Activated CD8-positive, alpha-beta memory T cell treated with anti-CD3 and anti-CD28 coated beads, Interleukin-2, amount 10 ng/mL, durations not matched to agents 7 days and 5 days (primary cell): ENCODE measurements at regions of chr17 and their contacts with region 1.

Region 1: DNA sequence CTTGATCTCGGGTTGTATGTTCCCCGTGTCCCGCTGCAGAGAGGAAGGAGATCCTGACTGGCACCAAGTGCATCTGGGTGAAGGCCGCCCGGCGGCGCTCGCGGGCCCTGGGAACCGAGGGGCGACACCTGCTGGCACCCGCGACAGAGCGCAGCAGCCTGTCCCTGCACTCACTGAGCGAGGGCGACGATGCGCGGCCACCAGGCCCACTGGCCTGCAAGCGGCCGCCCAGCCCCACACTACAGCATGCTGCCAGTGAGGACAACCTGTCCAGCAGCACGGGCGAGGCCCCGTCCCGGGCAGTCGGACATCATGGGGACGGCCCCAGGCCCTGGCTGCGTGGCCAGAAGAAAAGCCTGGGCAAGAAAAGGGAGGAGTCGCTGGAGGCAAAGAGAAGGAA is 7.5 kb downstream of the BTBD17 start:
- DNase-seq: peak; percentile 77
- ATAC-seq: peak; percentile 78
- H3K4me3 Mint-ChIP-seq: no peak overlapping the region
- H3K27ac Mint-ChIP-seq: no peak overlapping the region
- H3K4me1 Mint-ChIP-seq: peaks cover 10% of the 10 kb centered on the region
- H3K27me3 Mint-ChIP-seq: peaks cover 78% of the 10 kb centered on the region

Region 2: DNA sequence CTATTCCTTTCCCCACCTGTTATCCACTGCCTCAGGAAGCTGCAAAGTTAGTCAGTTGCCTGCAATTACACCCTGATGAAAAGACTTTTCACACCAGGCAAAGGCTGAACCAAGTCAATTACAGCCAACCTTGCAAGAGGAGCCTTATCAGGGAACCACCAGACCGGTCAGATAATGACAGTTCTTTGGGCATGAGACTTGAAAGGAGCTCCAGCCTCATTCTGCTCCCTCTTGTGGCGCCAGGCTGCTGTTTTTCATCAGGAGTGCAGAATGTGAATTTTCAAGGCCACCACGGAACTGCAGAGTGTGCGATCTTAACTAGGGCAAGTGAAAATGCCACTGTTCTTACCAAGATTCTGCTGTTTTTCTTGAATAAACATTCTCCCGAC is 57.6 kb before region 1 on chr17:
- CTCF ChIA-PET with region 1: interaction called, 37 read pairs
- DNase-seq: peak; percentile 64
- ATAC-seq: no peak
- H3K4me3 Mint-ChIP-seq: no peak overlapping the region
- H3K27ac Mint-ChIP-seq: no peak overlapping the region
- H3K4me1 Mint-ChIP-seq: peaks cover 23% of the 10 kb centered on the region
- H3K27me3 Mint-ChIP-seq: peaks cover 3% of the 10 kb centered on the region

Region 3: GRCh38 chr17:74305865-74306654 is 48.1 kb before region 1 on chr17:
- CTCF ChIA-PET with region 1: interaction called, 42 read pairs
- DNase-seq: no peak
- ATAC-seq: peak; percentile 46
- H3K4me3 Mint-ChIP-seq: no peak overlapping the region
- H3K27ac Mint-ChIP-seq: no peak overlapping the region
- H3K4me1 Mint-ChIP-seq: peaks cover 18% of the 10 kb centered on the region
- H3K27me3 Mint-ChIP-seq: peaks cover 4% of the 10 kb centered on the region

Region 4: DNA sequence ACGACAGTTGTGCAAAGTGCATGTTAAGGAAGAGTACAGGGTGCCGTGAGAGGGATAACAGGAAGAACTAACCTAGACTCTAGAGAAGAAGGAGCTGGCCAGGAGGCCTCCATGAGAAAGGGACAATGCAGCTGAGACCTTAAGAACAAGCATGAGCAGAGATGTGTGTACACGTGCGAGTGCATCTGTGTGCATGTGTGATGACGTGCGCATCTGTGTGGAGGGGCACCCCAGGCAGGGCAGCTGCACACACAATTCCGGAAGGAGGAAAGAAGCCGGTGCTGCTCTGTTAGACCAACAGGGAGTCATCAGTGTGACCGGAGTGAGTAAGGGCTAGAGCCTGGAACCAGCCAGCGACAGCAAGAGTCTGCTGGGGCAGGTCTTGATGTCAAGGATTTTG is 35.7 kb before region 1 on chr17:
- CTCF ChIA-PET with region 1: interaction called, 12 read pairs
- DNase-seq: no peak
- ATAC-seq: no peak
- H3K4me3 Mint-ChIP-seq: no peak overlapping the region
- H3K27ac Mint-ChIP-seq: no peak overlapping the region
- H3K4me1 Mint-ChIP-seq: no peaks in the 10 kb centered on the region
- H3K27me3 Mint-ChIP-seq: peaks cover 12% of the 10 kb centered on the region

Region 5: DNA sequence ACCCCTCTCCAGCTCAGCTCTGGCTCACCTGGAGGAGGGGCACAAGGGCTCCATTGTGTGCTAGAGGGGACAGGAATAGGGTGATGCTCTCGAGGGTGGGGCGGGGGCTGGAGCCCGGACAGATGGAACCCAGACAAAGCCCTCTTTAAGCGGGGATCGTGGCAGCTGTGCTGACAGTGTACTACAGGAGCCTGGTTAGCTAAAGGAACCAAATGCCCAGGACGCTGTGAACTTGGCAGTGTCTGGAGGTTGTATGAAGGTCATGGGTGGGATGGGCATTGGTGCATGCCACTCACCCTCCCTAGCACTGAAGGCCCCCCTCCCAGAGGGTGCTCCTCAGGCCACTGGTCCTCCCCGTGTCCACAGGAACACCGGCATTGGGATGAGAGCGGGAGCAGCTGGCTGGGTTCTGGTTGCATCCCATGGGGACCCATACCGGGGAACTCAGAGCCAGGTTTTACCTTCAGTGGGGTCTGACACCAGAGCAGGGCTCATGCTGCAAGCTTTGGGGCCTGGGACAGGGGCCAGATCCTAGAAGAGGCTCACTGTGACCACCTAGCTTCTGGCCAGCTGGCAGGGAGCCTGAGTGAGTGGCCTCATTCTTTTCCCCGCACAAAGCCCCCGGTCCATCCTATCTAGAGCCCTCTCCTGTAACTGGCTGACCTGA is 16.2 kb before region 1 on chr17:
- CTCF ChIA-PET with region 1: interaction called, 10 read pairs
- DNase-seq: no peak
- ATAC-seq: no peak
- H3K4me3 Mint-ChIP-seq: no peak overlapping the region
- H3K27ac Mint-ChIP-seq: no peak overlapping the region
- H3K4me1 Mint-ChIP-seq: peaks cover 22% of the 10 kb centered on the region
- H3K27me3 Mint-ChIP-seq: peaks cover 2% of the 10 kb centered on the region